Activated naive CD8-positive, alpha-beta T cell treated with anti-CD3 and anti-CD28 coated beads, Interleukin-2, amount 10 ng/mL, durations not matched to agents 7 days and 5 days (primary cell): ENCODE measurements at regions of chr6 and their contacts with region 1.

Region 1: GRCh38 chr6:28136585-28137504 is 4.8 kb upstream of the ZKSCAN8 start:
- DNase-seq: peak; percentile 78
- ATAC-seq: peak; percentile 51
- H3K4me3 Mint-ChIP-seq: peak overlapping the region; percentile 93
- H3K27ac Mint-ChIP-seq: peak overlapping the region; percentile 95
- H3K4me1 Mint-ChIP-seq: peaks cover 51% of the 10 kb centered on the region
- H3K27me3 Mint-ChIP-seq: no peaks in the 10 kb centered on the region

Region 2: DNA sequence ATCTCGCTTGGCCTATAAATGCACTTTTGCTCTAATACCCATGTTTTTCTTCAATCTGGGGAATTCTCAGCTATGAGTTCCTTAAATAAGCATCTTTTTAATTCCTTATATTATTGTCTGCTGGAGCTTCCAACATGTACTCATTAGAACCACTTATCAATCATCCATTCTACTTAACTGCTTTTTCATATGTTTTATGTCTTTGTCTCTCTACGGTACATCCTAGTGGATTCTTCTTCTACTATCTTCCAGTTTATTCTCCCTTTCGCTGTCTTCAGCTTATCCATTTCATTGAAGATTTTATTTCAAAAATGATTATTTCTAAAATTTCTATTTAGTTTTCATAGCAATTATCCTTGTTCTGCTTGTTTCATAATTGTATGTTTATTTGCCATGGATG is 24.9 kb before region 1 on chr6:
- POLR2A ChIA-PET with region 1: no interaction called
- DNase-seq: no peak
- ATAC-seq: no peak
- H3K4me3 Mint-ChIP-seq: no peak overlapping the region
- H3K27ac Mint-ChIP-seq: no peak overlapping the region
- H3K4me1 Mint-ChIP-seq: no peaks in the 10 kb centered on the region
- H3K27me3 Mint-ChIP-seq: no peaks in the 10 kb centered on the region

Region 3: GRCh38 chr6:28124102-28124970 is 12.5 kb before region 1 on chr6 and contains the start of gene ZSCAN16:
- POLR2A ChIA-PET with region 1: interaction called, 19 read pairs
- DNase-seq: peak; percentile 76
- ATAC-seq: peak; percentile 98
- H3K4me3 Mint-ChIP-seq: peak within 1 kb of the TSS; percentile 94
- H3K27ac Mint-ChIP-seq: peak within 1 kb of the TSS; percentile 89
- H3K4me1 Mint-ChIP-seq: peaks cover 40% of the 10 kb centered on the region
- H3K27me3 Mint-ChIP-seq: no peaks in the 10 kb centered on the region
- total RNA-seq, gene ZSCAN16: 6.9 to 8.6 TPM

Region 4: DNA sequence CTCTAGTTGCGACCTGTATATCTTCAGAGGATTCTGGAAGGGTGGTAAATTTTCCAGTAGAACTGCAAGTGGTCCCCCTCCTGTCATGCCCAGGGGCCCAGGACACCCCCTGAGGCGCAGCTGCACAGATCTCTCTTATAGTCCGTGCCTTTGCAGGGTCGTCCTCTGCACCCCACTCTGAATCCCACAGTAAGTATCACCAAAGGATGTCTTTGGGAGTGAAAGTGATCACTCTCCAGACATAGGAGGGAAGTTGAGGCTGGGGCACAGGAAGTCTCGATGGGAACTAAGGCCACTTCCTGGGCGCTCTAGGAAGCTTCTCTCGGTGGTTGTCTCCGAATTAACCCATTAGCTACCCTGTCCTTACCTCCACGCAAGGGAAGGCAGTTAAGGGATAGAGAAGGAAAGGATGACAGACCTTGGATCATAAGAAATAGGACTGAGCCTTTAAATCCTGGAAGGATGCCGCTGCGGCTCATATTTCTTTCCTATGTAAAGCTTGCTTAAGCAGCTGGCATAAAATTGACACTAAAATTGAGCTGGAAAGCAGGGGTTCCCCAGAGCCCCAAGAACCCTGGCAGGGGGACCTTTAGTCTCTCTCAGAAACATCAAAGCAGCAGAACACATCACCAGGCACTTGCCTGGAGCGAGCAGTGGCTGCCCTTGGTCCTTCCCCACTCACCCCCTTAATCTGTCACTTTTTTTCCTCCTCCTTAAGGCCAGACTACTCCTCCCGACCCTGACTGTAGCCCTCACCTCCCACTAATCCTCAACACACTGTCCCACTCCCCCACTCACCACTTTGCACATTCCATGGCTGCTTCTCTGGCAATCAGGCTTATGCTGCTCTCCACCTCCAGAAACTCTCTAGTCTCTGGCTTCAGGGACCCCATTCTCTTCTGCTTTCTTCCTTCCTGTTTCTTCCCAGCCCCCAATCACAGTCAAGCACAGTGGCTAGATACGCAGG is 115.4 kb after region 1 on chr6 and contains the start of gene ZKSCAN4:
- POLR2A ChIA-PET with region 1: interaction called, 11 read pairs
- DNase-seq: peak; percentile 66
- ATAC-seq: peak; percentile 66
- H3K4me3 Mint-ChIP-seq: peak within 1 kb of the TSS; percentile 91
- H3K27ac Mint-ChIP-seq: peak within 1 kb of the TSS; percentile 94
- H3K4me1 Mint-ChIP-seq: peaks cover 27% of the 10 kb centered on the region
- H3K27me3 Mint-ChIP-seq: peaks cover 2% of the 10 kb centered on the region
- total RNA-seq, gene ZKSCAN4: 10.5 to 11.3 TPM

Region 5: GRCh38 chr6:28355743-28356665 is 219.2 kb after region 1 on chr6:
- POLR2A ChIA-PET with region 1: interaction called, 11 read pairs
- DNase-seq: peak; percentile 65
- ATAC-seq: peak; percentile 83
- H3K4me3 Mint-ChIP-seq: peak overlapping the region; percentile 89
- H3K27ac Mint-ChIP-seq: peak overlapping the region; percentile 87
- H3K4me1 Mint-ChIP-seq: peaks cover 31% of the 10 kb centered on the region
- H3K27me3 Mint-ChIP-seq: no peaks in the 10 kb centered on the region